HepG2 (cell line): ENCODE measurements at regions of chr12 and their contacts with region 1.

Region 1: GRCh38 chr12:19739183-19739776 is 300.0 kb downstream of the AEBP2 start:
- DNase-seq: peak; percentile 41
- ATAC-seq: no peak
- H3K4me3 ChIP-seq: no peak overlapping the region
- H3K27ac ChIP-seq: no peak overlapping the region
- H3K4me1 ChIP-seq: no peaks in the 10 kb centered on the region
- H3K27me3 ChIP-seq: no peaks in the 10 kb centered on the region
- CTCF ChIP-seq: peak; percentile 58
- EP300 ChIP-seq: no peak
- POLR2A ChIP-seq: no peak
- RAD21 ChIP-seq: no peak

Region 2: DNA sequence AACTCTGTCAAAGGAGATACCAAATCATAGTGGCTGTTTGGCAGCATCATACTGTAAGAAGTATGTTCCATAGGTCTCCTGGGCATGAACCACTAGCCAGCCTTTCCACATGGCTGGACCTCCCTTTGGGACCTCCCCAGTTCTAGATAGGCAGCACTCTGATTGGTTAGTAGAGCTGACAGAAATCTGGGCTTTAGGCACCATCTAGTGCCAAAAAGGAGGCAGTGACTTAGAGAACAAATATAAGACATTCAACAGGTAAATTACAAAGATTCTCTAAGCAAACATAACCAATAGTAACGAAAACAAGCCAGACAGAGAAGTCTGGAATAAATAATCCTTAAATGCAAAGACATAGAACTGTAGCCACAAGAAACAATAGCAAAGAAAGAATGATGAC is 481.1 kb after region 1 on chr12:
- CTCF ChIA-PET with region 1: interaction called, 5 read pairs
- POLR2A ChIA-PET with region 1: no interaction called
- in situ Hi-C with region 1: no loop called
- intact Hi-C with region 1: loop called (anchors 1 kb)
- DNase-seq: no peak
- ATAC-seq: peak; percentile 70
- H3K4me3 ChIP-seq: no peak overlapping the region
- H3K27ac ChIP-seq: no peak overlapping the region
- H3K4me1 ChIP-seq: no peaks in the 10 kb centered on the region
- H3K27me3 ChIP-seq: no peaks in the 10 kb centered on the region
- CTCF ChIP-seq: peak; percentile 48
- EP300 ChIP-seq: no peak
- POLR2A ChIP-seq: no peak
- RAD21 ChIP-seq: 0 out of 2 replicates have a peak, but pooled peaks have one; percentile 16

Region 3: GRCh38 chr12:20376984-20377383 is 637.7 kb after region 1 on chr12:
- CTCF ChIA-PET with region 1: no interaction called
- POLR2A ChIA-PET with region 1: no interaction called
- in situ Hi-C with region 1: no loop called
- intact Hi-C with region 1: loop called (anchors 1 kb)
- DNase-seq: no peak
- ATAC-seq: no peak
- H3K4me3 ChIP-seq: no peak overlapping the region
- H3K27ac ChIP-seq: no peak overlapping the region
- H3K4me1 ChIP-seq: no peaks in the 10 kb centered on the region
- H3K27me3 ChIP-seq: no peaks in the 10 kb centered on the region
- CTCF ChIP-seq: peak; percentile 45
- EP300 ChIP-seq: no peak
- POLR2A ChIP-seq: no peak
- RAD21 ChIP-seq: no peak

Region 4: DNA sequence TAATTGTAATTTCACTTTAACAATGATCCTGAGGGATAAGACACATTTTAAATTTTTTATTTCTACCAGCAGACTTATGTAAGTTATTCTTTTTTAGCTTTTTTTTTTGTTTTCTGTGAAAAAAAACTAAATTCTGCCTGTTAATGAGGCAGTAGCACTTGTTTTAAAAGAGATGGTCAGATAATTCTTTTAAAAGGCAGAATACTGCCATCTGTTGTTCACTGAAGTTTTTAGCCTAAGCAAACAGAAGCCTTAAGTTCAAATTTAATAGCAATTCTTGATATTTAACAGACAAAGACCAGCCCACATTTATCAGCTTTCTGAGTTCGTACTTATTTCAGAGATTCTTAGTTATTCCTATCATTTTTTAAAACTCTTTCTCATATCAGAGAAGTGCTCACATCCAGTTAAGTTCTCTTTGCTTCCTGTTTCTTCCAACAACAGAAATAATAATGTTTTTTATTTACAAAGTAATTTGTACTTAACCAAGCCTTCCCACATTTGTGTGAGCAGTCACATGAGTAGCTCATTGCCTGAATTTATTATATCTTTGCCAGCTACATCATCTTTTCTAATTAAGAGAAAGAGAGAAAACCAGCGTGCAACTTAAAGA is 862.5 kb after region 1 on chr12:
- CTCF ChIA-PET with region 1: no interaction called
- POLR2A ChIA-PET with region 1: no interaction called
- in situ Hi-C with region 1: loop called (anchors 25 kb)
- intact Hi-C with region 1: loop called (anchors 2 kb)
- DNase-seq: peak; percentile 28
- ATAC-seq: no peak
- H3K4me3 ChIP-seq: no peak overlapping the region
- H3K27ac ChIP-seq: no peak overlapping the region
- H3K4me1 ChIP-seq: no peaks in the 10 kb centered on the region
- H3K27me3 ChIP-seq: no peaks in the 10 kb centered on the region; a peak in 1 of 5 replicates
- CTCF ChIP-seq: peak; percentile 48
- EP300 ChIP-seq: no peak
- POLR2A ChIP-seq: no peak
- RAD21 ChIP-seq: no peak

Region 5: DNA sequence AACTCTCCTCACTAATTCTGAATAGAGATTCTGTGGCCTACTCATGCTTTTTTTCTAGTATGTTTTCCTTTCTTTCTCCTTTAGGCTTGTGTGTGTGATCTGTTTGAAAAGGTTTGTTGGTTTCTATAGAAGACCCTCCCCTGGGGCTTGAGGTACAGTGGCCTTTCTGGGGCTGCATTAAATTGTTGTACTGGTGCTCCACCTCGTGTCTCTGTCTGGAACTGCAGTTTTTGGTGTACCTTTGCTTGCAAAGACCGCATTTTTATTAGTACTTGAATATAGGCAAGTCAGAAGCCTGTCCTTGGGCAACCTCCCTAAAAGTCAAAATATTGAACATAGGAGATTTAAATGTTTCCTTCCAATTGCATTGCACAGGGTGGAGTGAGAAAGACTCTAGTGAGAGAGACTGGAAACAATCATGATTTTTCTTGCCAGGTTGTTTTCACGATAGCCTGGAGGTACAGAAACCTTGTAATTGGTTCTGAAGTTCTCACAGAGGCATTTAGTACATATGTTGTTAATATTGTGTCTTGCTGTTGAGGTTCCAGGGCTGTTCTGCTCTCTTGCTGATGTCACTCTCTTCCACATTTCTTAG is 1430.7 kb after region 1 on chr12:
- CTCF ChIA-PET with region 1: no interaction called
- POLR2A ChIA-PET with region 1: no interaction called
- in situ Hi-C with region 1: no loop called
- intact Hi-C with region 1: loop called (anchors 2 kb)
- DNase-seq: peak; percentile 37
- ATAC-seq: peak; percentile 73
- H3K4me3 ChIP-seq: no peak overlapping the region
- H3K27ac ChIP-seq: no peak overlapping the region
- H3K4me1 ChIP-seq: no peaks in the 10 kb centered on the region
- H3K27me3 ChIP-seq: no peaks in the 10 kb centered on the region
- CTCF ChIP-seq: peak; percentile 80
- EP300 ChIP-seq: no peak
- POLR2A ChIP-seq: no peak
- RAD21 ChIP-seq: peak; percentile 62